ENCODE measurements at regions of chr1 and their contacts with region 1.

Region 1: DNA sequence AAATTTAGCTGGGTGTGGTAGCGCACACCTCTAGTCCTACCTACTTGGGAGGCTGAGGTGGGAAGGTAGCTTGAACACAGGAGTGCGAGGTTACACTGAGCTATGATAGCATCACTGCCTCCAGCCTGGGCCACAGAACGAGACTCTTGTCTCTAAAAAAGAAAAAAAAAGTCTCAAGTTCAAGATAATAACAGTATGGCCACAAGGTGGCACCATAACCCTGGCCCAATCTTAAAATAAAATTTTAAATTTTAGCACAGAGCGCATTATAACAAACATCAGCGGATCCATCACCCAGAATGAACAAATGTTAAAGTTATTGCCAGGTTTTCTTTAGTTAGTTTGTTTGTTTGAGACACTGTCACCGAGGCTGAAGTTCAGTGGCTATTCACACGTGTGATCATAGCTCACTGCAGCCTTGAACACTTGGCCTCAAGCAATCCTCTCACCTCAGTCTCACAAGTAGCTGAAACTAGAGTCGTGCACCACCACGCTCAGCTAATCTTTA is 2.9 kb upstream of the HTR6 start:
- DNase-seq: no peak
- CTCF ChIP-seq: peak; percentile 58

Region 2: DNA sequence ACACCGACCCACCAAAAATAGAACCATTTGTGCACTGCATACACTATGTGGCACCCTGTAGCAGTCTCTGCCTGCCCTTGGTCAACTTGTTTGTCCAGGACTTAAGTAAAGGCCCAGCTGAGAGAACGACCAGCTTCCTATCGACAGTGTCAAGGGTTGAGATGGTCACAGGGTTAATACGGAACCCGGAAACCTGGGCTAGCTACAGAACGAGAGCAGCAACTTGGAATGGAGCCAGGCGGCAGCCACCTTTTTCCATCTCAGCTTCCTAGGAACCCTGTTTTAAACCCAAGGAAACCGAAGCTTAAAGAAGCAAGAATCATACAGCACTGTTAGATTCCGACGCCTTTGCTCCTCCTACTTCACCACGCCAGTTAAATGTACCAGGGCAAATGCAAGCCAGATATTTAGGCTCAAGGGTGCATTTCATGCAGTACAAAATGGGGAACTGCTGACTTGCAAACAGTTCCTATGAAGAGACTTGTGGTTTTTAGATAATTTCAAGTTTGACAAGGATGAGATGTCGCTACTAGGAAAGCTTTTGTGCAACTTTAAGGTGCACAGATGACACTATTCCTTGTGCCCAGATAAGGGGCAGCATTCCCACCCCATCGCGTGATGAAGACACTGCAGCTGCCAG is 314.1 kb before region 1 on chr1:
- CTCF ChIA-PET with region 1: interaction called, 11 read pairs
- POLR2A ChIA-PET with region 1: no interaction called
- DNase-seq: no peak
- CTCF ChIP-seq: no peak

Region 3: DNA sequence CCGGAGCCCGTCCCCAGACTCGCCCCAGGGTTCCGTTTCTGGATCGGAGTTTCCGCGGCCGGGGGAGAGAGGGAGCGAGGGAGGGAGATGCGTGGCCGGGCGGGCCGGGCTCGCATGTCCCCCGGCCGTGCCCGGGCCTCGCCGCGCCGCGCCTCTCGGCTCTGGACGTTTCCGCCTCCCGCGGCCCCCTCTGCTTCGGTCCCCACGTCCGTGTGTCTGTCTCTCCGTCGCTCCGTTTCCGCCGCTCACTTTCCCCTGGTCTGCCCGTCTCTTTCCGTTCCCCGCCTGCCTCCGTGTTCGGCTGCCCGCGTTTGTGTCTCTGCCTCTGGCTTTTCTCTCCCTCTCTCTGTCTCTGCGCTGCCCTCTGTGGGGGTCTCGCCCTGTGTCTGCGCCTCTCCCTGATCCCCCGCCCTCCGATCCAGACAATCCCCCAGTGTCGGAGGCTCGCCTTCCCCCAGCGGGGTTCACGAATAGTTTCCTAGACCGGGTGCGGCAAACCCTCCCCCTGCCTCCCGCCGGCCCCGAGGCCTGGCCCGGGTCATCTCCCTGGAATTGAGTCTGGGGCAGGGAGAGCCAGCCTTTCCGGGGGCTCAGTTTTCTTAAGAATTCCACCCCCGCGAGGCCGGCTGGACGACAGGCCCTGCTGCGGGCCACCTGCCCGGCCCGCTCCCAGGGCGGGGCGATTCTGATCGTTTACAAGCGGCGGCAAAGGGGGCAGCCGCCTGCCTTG is 16.9 kb before region 1 on chr1:
- CTCF ChIA-PET with region 1: interaction called, 29 read pairs
- POLR2A ChIA-PET with region 1: no interaction called
- DNase-seq: peak; percentile 61
- CTCF ChIP-seq: no peak

Region 4: DNA sequence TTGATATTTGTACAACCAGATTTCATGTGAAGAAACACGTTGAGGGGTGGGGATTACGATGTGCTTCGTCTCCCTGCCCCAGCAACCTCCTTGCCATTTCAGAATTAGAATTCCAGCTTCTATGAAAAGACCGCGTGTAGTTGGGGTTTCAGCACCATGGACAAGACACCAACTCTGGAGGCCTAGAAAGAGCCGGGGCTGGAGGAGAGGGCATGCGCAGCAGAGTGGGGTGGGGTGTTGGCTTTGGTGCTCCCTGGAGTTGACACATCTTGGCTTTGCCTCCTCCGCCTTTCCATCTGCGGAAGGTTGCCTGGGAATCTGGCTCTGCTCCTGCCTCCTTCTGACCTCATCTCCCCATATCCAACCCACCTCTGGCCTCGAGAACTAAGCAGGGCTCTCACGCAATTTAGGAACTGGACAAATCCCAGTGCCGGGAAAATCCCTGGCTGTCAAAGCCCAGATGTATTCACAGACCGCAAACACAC is 14.7 kb after region 1 on chr1:
- CTCF ChIA-PET with region 1: interaction called, 39 read pairs
- POLR2A ChIA-PET with region 1: no interaction called
- DNase-seq: peak; percentile 44
- CTCF ChIP-seq: no peak

Region 5: DNA sequence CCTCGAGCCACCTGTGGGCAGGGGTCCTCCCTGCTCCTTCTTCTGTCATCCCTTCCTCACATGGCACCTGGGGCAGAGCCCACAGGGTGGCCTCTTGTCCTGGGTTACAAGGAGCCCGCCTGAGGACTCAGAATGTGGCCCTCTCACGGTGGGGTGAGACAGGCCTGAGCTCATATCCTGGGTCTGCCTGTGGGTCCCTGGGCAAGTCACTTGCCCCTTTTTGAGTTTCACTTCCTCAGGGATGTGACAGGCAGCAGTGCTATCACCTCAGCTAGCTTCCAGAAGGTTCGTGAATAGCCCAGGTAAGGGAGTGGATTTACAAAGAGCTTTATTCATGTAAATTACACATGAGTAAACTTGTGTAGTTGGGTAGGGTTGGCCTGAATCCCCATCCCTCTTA is 36.4 kb after region 1 on chr1:
- CTCF ChIA-PET with region 1: interaction called, 114 read pairs
- POLR2A ChIA-PET with region 1: no interaction called
- DNase-seq: peak; percentile 54
- CTCF ChIP-seq: no peak

Region 6: GRCh38 chr1:19715334-19716203 is 53.8 kb after region 1 on chr1:
- CTCF ChIA-PET with region 1: interaction called, 11 read pairs
- POLR2A ChIA-PET with region 1: no interaction called
- DNase-seq: peak; percentile 83
- CTCF ChIP-seq: peak; percentile 79

Region 7: DNA sequence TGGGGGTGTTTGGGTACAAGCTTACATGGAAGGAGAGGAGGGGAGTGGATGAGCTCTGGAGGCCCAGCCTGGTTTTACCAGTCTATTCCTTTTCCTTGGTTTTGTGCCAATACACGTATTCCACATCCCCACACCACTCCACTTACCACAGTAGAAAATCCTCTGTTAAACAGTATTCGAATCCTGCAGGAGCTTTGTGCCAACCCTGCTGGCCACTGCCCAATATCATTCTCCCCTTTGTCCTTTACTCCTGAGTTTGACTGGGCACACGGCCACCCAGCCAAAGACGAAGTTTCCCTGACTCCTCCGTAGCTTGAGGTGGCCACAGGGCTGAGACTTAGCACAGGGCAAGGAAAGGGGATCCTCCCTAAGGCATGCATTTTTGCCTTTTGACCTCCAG is 76.3 kb after region 1 on chr1:
- CTCF ChIA-PET with region 1: no interaction called
- POLR2A ChIA-PET with region 1: no interaction called
- DNase-seq: no peak
- CTCF ChIP-seq: no peak